Head of caudate nucleus (tissue), 42 donors: ENCODE measurements at regions of chr11 and their contacts with region 1.

Region 1: GRCh38 chr11:122159173-122159721 is 43.2 kb upstream of the BLID start:
- DNase-seq: peak; percentile 28 to 82 (median 62)

Region 2: GRCh38 chr11:122101625-122102291 is 57.5 kb before region 1 on chr11:
- intact Hi-C with region 1: loop called (anchors 5 kb)
- DNase-seq: peak; percentile 57 to 95 (median 86)

Region 3: GRCh38 chr11:122344274-122344673 is 185.0 kb after region 1 on chr11:
- intact Hi-C with region 1: no loop called
- DNase-seq: no peak